Gastrocnemius medialis (tissue), 4 donors: ENCODE measurements at regions of chr7 and their contacts with region 1.

Region 1: DNA sequence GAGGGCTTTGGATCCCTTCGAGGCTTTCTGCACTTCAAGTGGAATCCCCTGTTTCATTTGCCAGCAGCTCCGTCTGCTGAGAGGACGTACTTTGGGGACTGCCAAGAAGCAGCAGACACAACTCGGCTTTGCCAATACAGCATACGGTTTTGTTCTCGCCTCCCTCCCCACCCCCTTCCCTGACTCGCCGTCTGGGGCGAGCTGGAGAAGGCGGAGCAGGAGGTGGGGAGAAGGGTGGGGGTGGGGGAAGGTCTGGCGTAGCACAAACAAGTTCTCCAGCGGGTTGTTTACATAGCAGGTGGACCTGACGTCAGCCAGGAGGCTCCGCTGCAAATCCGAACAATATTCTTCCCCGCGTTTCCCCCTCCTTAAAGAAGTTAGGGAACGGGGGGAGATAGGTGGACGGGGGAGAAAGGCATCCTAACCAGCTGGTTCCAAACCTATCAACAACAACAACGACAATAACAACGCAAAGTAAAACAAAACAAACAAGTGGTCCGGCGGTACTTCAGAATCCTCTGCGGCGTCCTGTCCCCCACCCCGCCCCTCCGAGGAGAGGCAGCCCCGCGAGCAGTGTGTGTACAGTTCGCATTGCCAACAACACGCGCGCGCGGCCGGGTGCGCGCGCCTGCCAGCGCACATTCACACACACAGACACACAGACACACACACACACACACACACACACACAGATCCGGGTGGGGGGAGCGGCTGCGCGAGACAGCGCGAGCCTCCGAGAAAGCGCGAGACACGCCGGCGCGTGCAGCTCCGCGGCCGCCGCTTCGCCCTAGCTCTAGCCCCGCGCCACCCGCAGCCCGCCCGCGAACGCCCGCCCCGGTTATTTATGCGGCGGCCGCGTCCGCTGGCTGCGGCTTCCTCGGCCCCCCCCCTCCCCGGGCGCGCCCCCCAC is 167.0 kb upstream of the PPP1R3A start:
- DNase-seq: peak; percentile 93 to 95
- ATAC-seq: peak; percentile 72
- H3K4me3 ChIP-seq: peak overlapping the region; percentile 63 to 84 (median 80)
- H3K27ac ChIP-seq: peak overlapping the region; percentile 92 to 99 (median 98)
- H3K4me1 ChIP-seq: peaks cover 30 to 43% of the 10 kb centered on the region in 2 donors
- H3K27me3 ChIP-seq: peaks cover 0 to 6% (median 0%) of the 10 kb centered on the region in 3 donors
- CTCF ChIP-seq: peak in 1 of 5 experiments; percentile 10
- POLR2A ChIP-seq: peak; percentile 81

Region 2: GRCh38 chr7:112449902-112450806 is 1635.7 kb before region 1 on chr7 and contains the start of gene IFRD1:
- in situ Hi-C with region 1: no loop called
- intact Hi-C with region 1: loop called (anchors 10 kb)
- DNase-seq: peak; percentile 99
- ATAC-seq: peak; percentile 54 to 57
- H3K4me3 ChIP-seq: peak within 1 kb of the TSS; percentile 87 to 92 (median 90)
- H3K27ac ChIP-seq: peak within 1 kb of the TSS; percentile 96 to 100 (median 98)
- H3K4me1 ChIP-seq: peaks cover 32 to 48% of the 10 kb centered on the region in 2 donors
- H3K27me3 ChIP-seq: no peaks in the 10 kb centered on the region
- CTCF ChIP-seq: no peak
- POLR2A ChIP-seq: peak; percentile 100
- total RNA-seq, gene IFRD1: 37.8 to 70.8 (median 50.1) TPM

Region 3: GRCh38 chr7:113784956-113785355 is 300.9 kb before region 1 on chr7:
- in situ Hi-C with region 1: no loop called
- intact Hi-C with region 1: no loop called
- DNase-seq: no peak
- ATAC-seq: no peak
- H3K4me3 ChIP-seq: no peak overlapping the region
- H3K27ac ChIP-seq: no peak overlapping the region
- H3K4me1 ChIP-seq: peaks cover 0 to 11% of the 10 kb centered on the region in 2 donors
- H3K27me3 ChIP-seq: no peaks in the 10 kb centered on the region
- CTCF ChIP-seq: no peak
- POLR2A ChIP-seq: no peak

Region 4: DNA sequence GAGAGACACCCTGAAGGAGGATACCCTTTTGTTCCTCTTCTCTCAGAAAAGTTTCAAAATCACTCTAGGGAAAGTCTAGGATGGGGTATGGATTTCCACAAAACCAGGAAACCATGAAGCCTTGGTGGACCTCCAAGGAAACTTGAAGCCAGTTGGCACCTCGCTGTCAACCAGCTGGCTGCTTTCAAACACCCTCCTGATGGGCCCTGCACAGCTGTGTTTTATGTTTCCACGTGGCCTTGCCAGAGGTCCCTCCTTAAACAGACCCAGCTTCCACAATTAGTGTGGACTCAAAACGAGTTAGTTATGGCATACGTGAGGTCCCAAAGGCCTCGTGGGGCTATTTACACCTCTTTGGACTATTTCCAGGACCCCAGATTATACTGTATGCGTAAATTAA is 173.0 kb before region 1 on chr7:
- in situ Hi-C with region 1: no loop called
- intact Hi-C with region 1: loop called (anchors 2 kb)
- DNase-seq: peak; percentile 80 to 90
- ATAC-seq: peak; percentile 85 to 95
- H3K4me3 ChIP-seq: peak overlapping the region; percentile 34 to 67 (median 51)
- H3K27ac ChIP-seq: peak overlapping the region; percentile 87 to 90 (median 89)
- H3K4me1 ChIP-seq: peaks cover 29 to 39% of the 10 kb centered on the region in 2 donors
- H3K27me3 ChIP-seq: no peaks in the 10 kb centered on the region
- CTCF ChIP-seq: no peak
- POLR2A ChIP-seq: peak; percentile 18 to 46

Region 5: GRCh38 chr7:114414156-114415063 is 328.6 kb after region 1 on chr7 and contains the start of gene FOXP2:
- in situ Hi-C with region 1: loop called in 3 of 4 experiments (anchors 10 to 25 kb)
- intact Hi-C with region 1: loop called (anchors 5 kb)
- DNase-seq: no peak
- ATAC-seq: peak in 1 of 2 donors; percentile 15
- H3K4me3 ChIP-seq: peak within 1 kb of the TSS; percentile 44 to 50 (median 45)
- H3K27ac ChIP-seq: peak within 1 kb of the TSS; percentile 74 to 84 (median 75)
- H3K4me1 ChIP-seq: peaks cover 47 to 54% of the 10 kb centered on the region in 2 donors
- H3K27me3 ChIP-seq: no peaks in the 10 kb centered on the region
- CTCF ChIP-seq: no peak
- POLR2A ChIP-seq: no peak
- total RNA-seq, gene FOXP2: 4.9 to 16.9 (median 7.5) TPM

Region 6: GRCh38 chr7:114554781-114555537 is 469.1 kb after region 1 on chr7:
- in situ Hi-C with region 1: no loop called
- intact Hi-C with region 1: loop called (anchors 1 kb)
- DNase-seq: peak; percentile 28 to 46
- ATAC-seq: peak; percentile 100
- H3K4me3 ChIP-seq: no peak overlapping the region
- H3K27ac ChIP-seq: peak overlapping the region in 2 of 4 donors; percentile 63 to 69
- H3K4me1 ChIP-seq: peaks cover 6 to 15% of the 10 kb centered on the region in 2 donors
- H3K27me3 ChIP-seq: no peaks in the 10 kb centered on the region
- CTCF ChIP-seq: no peak
- POLR2A ChIP-seq: no peak